ENCODE measurements at regions of chr5 and their contacts with region 1.

Region 1: GRCh38 chr5:72402959-72403628 is 82.9 kb downstream of the PTCD2 start:
- DNase-seq: no peak
- H3K4me3 ChIP-seq: no peak overlapping the region
- H3K27me3 ChIP-seq: no peaks in the 10 kb centered on the region
- CTCF ChIP-seq: peak; percentile 42

Region 2: GRCh38 chr5:72390836-72391235 is 12.3 kb before region 1 on chr5:
- CTCF ChIA-PET with region 1: interaction called, 11 read pairs
- POLR2A ChIA-PET with region 1: no interaction called
- DNase-seq: no peak
- H3K4me3 ChIP-seq: no peak overlapping the region
- H3K27me3 ChIP-seq: no peaks in the 10 kb centered on the region
- CTCF ChIP-seq: no peak

Region 3: GRCh38 chr5:72427488-72428437 is 24.7 kb after region 1 on chr5:
- CTCF ChIA-PET with region 1: no interaction called
- POLR2A ChIA-PET with region 1: no interaction called
- DNase-seq: peak; percentile 18
- H3K4me3 ChIP-seq: no peak overlapping the region
- H3K27me3 ChIP-seq: no peaks in the 10 kb centered on the region
- CTCF ChIP-seq: no peak